ENCODE measurements at regions of chr2 and their contacts with region 1.

Region 1: DNA sequence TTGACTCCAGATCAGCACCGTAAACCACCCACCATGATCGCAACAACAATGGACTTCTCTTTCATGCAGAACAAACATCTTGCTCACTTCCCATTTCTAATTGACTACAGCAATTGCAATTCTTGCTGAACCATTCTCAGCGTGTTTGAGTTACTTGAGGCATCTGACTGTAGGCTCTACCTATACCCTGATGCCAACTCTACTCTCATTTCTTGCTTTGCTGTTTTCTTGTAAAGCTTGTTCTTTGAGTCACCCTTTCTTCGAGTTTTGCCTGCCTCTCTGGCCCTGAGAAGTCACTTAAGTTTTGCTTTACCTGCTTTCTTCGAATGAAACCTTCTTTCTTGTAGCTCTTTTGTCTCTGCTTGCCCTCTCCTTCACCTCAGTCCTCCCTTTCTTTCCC is 160.5 kb upstream of the RND3 start:
- DNase-seq: no peak
- H3K4me3 ChIP-seq: no peak overlapping the region
- H3K27ac ChIP-seq: no peak overlapping the region
- H3K4me1 ChIP-seq: peaks cover 17 to 25% of the 10 kb centered on the region in 2 donors
- H3K27me3 ChIP-seq: no peaks in the 10 kb centered on the region
- CTCF ChIP-seq: no peak
- POLR2A ChIP-seq: no peak

Region 2: DNA sequence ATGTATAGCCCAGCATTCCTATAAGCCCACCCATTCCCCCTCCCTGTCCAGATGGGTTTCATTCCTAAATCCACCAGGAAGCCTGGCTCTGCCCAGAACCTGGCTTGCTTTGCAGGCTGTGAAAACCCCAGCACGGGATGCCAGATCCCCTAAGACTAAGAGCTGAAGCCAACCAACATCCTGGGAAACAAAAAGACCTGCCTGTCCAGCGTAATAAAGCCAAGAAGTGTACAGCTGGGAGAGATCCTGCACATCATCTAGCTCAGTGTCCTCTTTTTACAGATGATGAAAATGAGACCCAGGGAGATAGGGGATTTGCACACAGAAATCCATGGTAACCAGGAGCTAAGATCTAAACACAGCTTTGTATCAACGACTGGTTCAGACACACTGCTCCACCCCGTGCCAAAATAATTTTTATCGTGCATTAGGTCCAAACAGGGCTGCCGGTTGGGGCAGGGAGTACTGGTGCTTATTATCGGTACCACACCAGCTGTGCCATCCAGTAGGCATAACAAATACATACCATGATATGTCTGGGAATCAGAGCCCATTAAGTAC is 163.4 kb before region 1 on chr2:
- intact Hi-C with region 1: no loop called
- DNase-seq: no peak
- H3K4me3 ChIP-seq: peak overlapping the region in 1 of 4 donors; percentile 88
- H3K27ac ChIP-seq: peak overlapping the region in 3 of 5 donors; percentile 91 to 95 (median 91)
- H3K4me1 ChIP-seq: peaks cover 26 to 51% of the 10 kb centered on the region in 2 donors
- H3K27me3 ChIP-seq: no peaks in the 10 kb centered on the region
- CTCF ChIP-seq: no peak
- POLR2A ChIP-seq: peak in 1 of 2 donors; percentile 19

Region 3: GRCh38 chr2:150674283-150674682 is 26.3 kb after region 1 on chr2:
- intact Hi-C with region 1: loop called in 1 of 2 experiments (anchors 2 kb)
- DNase-seq: no peak
- H3K4me3 ChIP-seq: no peak overlapping the region
- H3K27ac ChIP-seq: no peak overlapping the region
- H3K4me1 ChIP-seq: no peaks in the 10 kb centered on the region
- H3K27me3 ChIP-seq: no peaks in the 10 kb centered on the region
- CTCF ChIP-seq: no peak
- POLR2A ChIP-seq: no peak

Region 4: DNA sequence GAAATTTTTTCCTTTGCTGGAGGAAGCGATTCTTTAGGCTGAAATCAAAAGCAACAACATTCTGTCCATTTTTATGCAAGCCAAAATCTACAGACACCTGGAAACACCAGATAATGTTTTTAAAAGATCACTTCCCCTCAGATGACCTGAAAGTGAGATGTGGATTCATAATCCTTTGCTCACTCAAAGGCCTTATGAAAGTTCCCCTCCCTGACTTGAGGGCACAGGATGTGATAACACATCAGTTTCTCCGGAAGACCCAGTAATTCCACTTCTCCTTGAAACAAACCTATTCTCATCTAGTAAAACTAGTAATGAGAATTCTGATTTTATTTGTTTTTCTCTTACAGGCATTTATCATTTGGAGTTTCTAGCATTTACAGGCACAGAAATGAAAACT is 57.8 kb after region 1 on chr2:
- intact Hi-C with region 1: no loop called
- DNase-seq: no peak
- H3K4me3 ChIP-seq: no peak overlapping the region
- H3K27ac ChIP-seq: no peak overlapping the region
- H3K4me1 ChIP-seq: peaks cover 0 to 7% of the 10 kb centered on the region in 2 donors
- H3K27me3 ChIP-seq: no peaks in the 10 kb centered on the region
- CTCF ChIP-seq: no peak
- POLR2A ChIP-seq: no peak